MCF 10A (cell line): ENCODE measurements at regions of chrX and their contacts with region 1.

Region 1: GRCh38 chrX:43552156-43552555 is 103.9 kb upstream of the MAOA start:
- DNase-seq: peak; percentile 74
- H3K4me3 Mint-ChIP-seq: no peak overlapping the region
- H3K27ac Mint-ChIP-seq: no peak overlapping the region
- H3K4me1 Mint-ChIP-seq: no peaks in the 10 kb centered on the region
- H3K27me3 Mint-ChIP-seq: peaks cover 86% of the 10 kb centered on the region
- CTCF ChIP-seq: no peak

Region 2: GRCh38 chrX:43349363-43349762 is 202.8 kb before region 1 on chrX:
- CTCF ChIA-PET with region 1: interaction called, 47 read pairs
- POLR2A ChIA-PET with region 1: interaction called, 5 read pairs
- intact Hi-C with region 1: loop called (anchors 1 kb)
- DNase-seq: peak; percentile 70
- H3K4me3 Mint-ChIP-seq: no peak overlapping the region
- H3K27ac Mint-ChIP-seq: no peak overlapping the region
- H3K4me1 Mint-ChIP-seq: no peaks in the 10 kb centered on the region
- H3K27me3 Mint-ChIP-seq: peaks cover 87% of the 10 kb centered on the region
- CTCF ChIP-seq: peak; percentile 80